ENCODE measurements at regions of chr9 and their contacts with region 1.

Region 1: DNA sequence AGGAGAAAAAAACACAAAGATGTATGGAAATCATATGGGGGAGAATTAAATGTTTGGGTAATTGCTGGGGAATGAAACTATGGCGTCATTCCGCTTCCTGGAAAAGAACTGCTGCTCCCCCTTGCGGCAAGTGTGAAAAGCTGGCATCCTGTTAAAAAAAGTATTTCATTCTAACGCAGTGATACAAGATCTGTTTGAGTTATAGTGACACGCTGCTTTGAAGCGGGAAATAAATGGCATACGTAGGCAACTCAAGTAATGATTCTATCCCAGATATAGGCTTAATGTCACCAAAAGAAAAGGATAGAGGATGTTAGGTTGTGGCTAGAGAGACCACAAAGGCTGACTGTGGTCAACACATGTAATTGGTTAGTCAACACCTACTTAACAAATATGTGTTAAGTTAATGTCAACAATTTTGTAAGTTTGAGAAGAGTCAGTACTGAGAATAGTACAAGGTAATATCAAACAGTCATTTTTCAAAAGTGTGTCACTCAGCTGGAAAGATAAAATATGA is 70.2 kb upstream of the ALDH1A1 start:
- DNase-seq: peak; percentile 40
- ATAC-seq: peak in 1 of 2 donors; percentile 48

Region 2: GRCh38 chr9:72856972-72857623 is 166.0 kb before region 1 on chr9:
- intact Hi-C with region 1: loop called (anchors 5 kb)
- DNase-seq: no peak
- ATAC-seq: peak; percentile 75 to 77

Region 3: GRCh38 chr9:72864327-72864726 is 158.8 kb before region 1 on chr9:
- intact Hi-C with region 1: loop called (anchors 5 kb)
- DNase-seq: no peak
- ATAC-seq: no peak

Region 4: DNA sequence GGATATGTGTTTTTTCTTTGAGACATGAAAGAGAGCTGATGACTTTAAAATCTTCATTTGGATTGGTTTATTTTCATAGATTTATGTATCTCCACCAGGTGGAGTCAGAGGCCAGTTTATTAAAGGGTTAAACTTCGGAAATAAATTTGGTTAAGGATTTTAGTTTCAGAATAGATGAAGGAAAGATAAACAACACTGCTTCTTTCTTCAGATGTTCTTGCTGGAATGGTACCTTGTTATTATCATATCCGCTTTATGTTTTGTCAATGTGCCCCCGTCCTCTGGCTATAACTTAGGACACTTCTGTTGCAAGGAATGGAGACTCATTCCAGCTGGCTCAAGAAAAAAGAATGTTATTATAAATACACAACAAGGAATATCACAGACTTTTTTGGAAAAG is 151.4 kb before region 1 on chr9:
- intact Hi-C with region 1: loop called in 1 of 2 experiments (anchors 5 kb)
- DNase-seq: no peak
- ATAC-seq: no peak

Region 5: GRCh38 chr9:73269430-73270101 is 246.5 kb after region 1 on chr9:
- intact Hi-C with region 1: no loop called
- DNase-seq: no peak
- ATAC-seq: no peak

Measured in left cardiac atrium (tissue), 4 donors.